HepG2 (cell line): ENCODE measurements at regions of chr5 and their contacts with region 1.

Region 1: DNA sequence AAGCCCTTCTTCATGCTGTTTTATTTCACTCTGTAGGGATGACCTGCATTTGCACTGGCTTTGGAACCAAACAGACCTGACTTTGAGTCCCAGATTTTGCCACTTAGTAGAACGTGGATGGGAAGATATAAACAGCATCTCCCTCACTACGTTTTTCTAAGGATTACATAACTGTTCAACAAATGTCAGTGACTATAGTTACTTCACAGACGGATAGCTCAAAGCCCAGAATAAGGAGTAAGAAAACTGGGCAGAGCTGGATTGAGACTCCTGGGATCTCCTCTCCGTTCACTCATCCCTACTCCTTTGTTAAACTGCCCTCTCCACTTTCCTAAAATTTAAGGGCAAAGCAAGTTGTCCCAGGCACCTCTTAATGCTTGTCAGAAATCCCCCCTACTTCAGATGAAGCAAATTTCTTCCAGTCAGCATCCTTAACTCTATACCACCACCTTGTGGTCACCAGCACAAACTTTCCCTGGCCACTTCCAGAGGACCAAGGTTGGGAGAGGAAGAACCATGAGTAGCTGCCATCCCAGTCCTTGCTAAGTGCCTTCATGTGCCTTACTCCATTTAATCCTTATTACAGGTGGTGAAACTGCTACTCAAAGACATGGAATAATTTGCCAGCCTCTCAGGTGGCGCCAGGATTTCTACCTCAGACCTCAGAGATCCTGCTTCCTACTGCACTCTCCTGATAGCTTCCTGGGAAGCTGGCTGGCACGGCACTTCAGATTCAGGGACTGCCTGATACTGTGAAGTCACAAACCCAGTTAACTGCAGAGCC is 38.4 kb downstream of the EGR1 start:
- DNase-seq: peak; percentile 56
- ATAC-seq: peak; percentile 42
- H3K4me3 ChIP-seq: no peak overlapping the region
- H3K27ac ChIP-seq: no peak overlapping the region
- H3K4me1 ChIP-seq: peaks cover 60% of the 10 kb centered on the region
- H3K27me3 ChIP-seq: no peaks in the 10 kb centered on the region
- CTCF ChIP-seq: peak; percentile 91
- EP300 ChIP-seq: no peak
- POLR2A ChIP-seq: no peak
- RAD21 ChIP-seq: peak; percentile 89

Region 2: DNA sequence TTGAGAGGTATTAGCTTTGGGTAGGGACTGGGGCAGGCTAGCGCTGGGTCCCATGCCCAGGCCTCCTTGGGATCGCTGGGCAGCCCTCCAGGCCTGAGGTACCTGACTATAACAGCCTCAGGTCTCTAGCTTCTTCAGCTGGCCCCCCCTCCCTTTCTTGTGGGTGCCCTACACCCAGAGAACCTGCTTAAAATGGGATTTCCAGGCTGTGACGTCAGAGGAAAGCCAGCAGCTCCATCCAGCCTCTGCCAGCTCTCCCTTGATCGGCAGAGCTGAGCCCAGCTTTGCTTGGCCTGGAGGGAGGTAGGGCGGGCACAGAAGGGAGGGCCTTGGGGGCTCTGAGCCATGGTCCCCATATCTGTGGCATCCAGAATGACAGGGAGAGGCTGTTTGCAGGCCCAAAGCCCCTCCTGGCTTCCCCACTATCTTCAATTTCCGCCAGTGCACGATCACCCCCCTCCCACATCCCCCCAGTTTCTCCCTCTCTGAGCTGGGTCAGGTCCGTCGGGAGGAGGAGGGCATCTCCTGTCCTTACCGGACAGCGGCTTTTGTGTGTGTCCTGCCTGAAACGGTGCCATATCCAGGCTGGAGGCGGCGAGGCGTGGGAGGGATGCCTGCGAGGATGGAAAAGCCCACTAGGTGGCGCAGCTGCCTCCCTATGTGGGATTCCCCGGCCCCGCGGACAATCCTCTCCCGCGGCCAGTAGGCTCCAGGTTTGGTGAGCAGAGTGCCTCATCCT is 54.0 kb before region 1 on chr5:
- CTCF ChIA-PET with region 1: interaction called, 27 read pairs
- POLR2A ChIA-PET with region 1: interaction called, 4 read pairs
- in situ Hi-C with region 1: loop called (anchors 10 kb)
- intact Hi-C with region 1: loop called (anchors 1 kb)
- DNase-seq: peak; percentile 63
- ATAC-seq: peak; percentile 86
- H3K4me3 ChIP-seq: peak overlapping the region; percentile 11 to 65 (median 24); a peak in 4 of 6 replicates
- H3K27ac ChIP-seq: no peak overlapping the region
- H3K4me1 ChIP-seq: peaks cover 40% of the 10 kb centered on the region
- H3K27me3 ChIP-seq: peaks cover 4 to 26% of the 10 kb centered on the region in 2 experiments; a peak in 3 of 5 replicates
- CTCF ChIP-seq: peak; percentile 99
- EP300 ChIP-seq: no peak
- POLR2A ChIP-seq: no peak
- RAD21 ChIP-seq: peak; percentile 94

Region 3: GRCh38 chr5:138464008-138464387 is 39.7 kb before region 1 on chr5:
- CTCF ChIA-PET with region 1: interaction called, 29 read pairs
- POLR2A ChIA-PET with region 1: interaction called, 25 read pairs
- in situ Hi-C with region 1: loop called (anchors 5 kb)
- intact Hi-C with region 1: loop called (anchors 1 kb)
- DNase-seq: peak; percentile 86
- ATAC-seq: peak; percentile 68
- H3K4me3 ChIP-seq: peak overlapping the region; percentile 69 to 91 (median 78)
- H3K27ac ChIP-seq: peak overlapping the region; percentile 95
- H3K4me1 ChIP-seq: peaks cover 50% of the 10 kb centered on the region
- H3K27me3 ChIP-seq: peaks cover 0 to 3% of the 10 kb centered on the region in 2 experiments; a peak in 1 of 5 replicates
- CTCF ChIP-seq: peak; percentile 90
- EP300 ChIP-seq: peak in 1 of 2 experiments; percentile 53; a peak in 1 of 4 replicates
- POLR2A ChIP-seq: no peak
- RAD21 ChIP-seq: peak; percentile 95

Region 4: GRCh38 chr5:138469540-138470321 is 33.9 kb before region 1 on chr5:
- CTCF ChIA-PET with region 1: interaction called, 29 read pairs
- POLR2A ChIA-PET with region 1: interaction called, 25 read pairs
- in situ Hi-C with region 1: loop called (anchors 5 kb)
- intact Hi-C with region 1: loop called (anchors 1 kb)
- DNase-seq: no peak
- ATAC-seq: peak; percentile 3
- H3K4me3 ChIP-seq: no peak overlapping the region
- H3K27ac ChIP-seq: no peak overlapping the region
- H3K4me1 ChIP-seq: peaks cover 51% of the 10 kb centered on the region
- H3K27me3 ChIP-seq: 0 out of 5 replicates have a peak, but pooled peaks cover 0 to 2% of the 10 kb centered on the region in 2 experiments
- CTCF ChIP-seq: no peak
- EP300 ChIP-seq: no peak
- POLR2A ChIP-seq: peak in 1 of 2 experiments; percentile 85; a peak in 1 of 4 replicates
- RAD21 ChIP-seq: no peak

Region 5: DNA sequence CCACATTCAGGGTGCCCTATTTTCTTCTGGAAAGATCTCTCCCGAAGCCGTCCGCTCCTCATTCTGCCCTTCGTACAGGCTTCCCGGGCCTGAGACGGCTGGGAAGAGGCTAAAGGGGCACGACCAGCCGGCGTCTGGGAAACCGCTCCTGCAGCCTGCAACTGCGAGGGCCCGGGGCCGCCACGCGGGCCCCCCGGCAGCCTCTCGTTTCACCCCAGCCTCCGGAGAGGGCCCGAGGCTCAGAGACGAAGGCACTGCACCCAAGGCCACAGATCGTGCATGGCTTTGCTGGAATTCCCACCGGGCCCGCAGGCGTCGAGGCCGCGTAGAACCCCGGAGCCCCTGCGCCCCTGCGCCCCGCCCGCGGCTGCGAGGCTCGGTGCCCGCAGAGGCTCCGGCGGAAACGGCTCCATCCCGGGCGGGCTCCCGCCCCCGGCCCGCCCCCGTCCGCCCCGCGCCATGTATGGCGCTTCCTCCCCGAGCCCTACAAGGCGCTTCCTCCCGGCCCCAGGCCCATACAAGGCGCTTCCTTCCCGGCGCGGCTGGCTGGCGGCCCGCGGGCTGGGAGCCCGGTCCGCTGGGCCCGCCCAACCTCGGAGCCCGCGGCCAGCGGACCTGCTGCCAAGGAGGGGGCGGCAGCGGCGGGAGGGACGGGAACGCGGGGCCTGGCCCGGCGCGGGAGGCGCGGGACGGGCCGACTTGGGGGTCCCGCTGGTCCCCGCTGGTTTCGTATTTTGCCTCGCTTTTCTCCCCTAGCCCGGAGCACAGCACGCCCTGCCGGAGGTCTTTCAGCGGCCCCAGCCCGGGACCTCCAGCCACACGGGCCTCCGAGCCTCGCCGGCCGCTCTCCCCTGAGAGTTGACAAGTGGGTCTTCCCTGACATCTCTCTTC is 11.8 kb before region 1 on chr5:
- CTCF ChIA-PET with region 1: no interaction called
- POLR2A ChIA-PET with region 1: interaction called, 10 read pairs
- in situ Hi-C with region 1: no loop called
- intact Hi-C with region 1: no loop called
- DNase-seq: peak; percentile 72
- ATAC-seq: peak; percentile 84
- H3K4me3 ChIP-seq: peak overlapping the region; percentile 75 to 82 (median 79)
- H3K27ac ChIP-seq: peak overlapping the region; percentile 87
- H3K4me1 ChIP-seq: peaks cover 53% of the 10 kb centered on the region
- H3K27me3 ChIP-seq: peaks cover 4 to 35% of the 10 kb centered on the region in 2 experiments; a peak in 4 of 5 replicates
- CTCF ChIP-seq: peak; percentile 2; the same call in 1 of the 2 replicates
- EP300 ChIP-seq: no peak
- POLR2A ChIP-seq: peak in 1 of 2 experiments; percentile 72; a peak in 3 of 4 replicates
- RAD21 ChIP-seq: 0 out of 2 replicates have a peak, but pooled peaks have one; percentile 4